Endothelial cell of umbilical vein (primary cell): ENCODE measurements at regions of chr3 and their contacts with region 1.

Region 1: DNA sequence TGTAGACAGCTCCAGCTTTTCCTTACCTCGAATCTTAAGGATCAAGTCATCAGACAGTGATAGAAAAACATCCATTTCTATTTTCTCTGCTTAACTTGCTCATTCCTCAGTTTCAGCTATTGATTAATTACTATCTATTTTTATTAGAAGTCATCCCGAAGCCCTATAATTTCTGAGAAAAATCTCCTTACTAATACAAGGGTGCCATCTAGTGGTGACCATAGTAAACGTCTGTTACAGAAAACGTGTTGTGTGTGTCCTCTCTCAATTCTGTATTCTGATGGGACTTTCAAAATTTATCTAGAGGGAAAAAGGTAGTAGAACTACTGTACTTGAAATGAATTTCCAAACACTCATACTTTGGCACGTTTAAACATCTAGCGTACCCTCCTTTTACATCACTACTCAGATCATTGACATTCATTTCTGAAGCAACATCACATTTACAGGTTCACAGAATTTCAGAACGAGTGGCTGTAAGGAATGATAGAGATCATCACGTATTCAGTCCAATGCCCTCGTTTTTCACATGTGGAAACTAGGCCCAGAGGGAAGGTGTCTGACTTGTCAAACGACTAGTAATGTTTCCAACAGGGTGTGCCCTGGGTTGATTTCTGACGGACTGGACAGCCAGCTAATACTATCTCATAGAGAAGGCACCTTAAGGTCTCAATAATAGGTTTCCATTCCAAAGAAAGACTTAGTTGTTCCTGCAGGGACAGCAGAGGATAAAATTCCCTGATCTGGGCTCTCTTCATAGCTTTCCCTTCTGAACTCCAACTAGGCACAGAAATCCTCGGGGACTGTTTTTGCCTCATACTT is 25.6 kb downstream of the HACD2 start:
- DNase-seq: peak; percentile 53
- H3K4me3 ChIP-seq: no peak overlapping the region
- H3K27ac ChIP-seq: no peak overlapping the region
- H3K4me1 ChIP-seq: no peaks in the 10 kb centered on the region
- H3K27me3 ChIP-seq: no peaks in the 10 kb centered on the region
- CTCF ChIP-seq: peak; percentile 44 to 51
- POLR2A ChIP-seq: no peak

Region 2: DNA sequence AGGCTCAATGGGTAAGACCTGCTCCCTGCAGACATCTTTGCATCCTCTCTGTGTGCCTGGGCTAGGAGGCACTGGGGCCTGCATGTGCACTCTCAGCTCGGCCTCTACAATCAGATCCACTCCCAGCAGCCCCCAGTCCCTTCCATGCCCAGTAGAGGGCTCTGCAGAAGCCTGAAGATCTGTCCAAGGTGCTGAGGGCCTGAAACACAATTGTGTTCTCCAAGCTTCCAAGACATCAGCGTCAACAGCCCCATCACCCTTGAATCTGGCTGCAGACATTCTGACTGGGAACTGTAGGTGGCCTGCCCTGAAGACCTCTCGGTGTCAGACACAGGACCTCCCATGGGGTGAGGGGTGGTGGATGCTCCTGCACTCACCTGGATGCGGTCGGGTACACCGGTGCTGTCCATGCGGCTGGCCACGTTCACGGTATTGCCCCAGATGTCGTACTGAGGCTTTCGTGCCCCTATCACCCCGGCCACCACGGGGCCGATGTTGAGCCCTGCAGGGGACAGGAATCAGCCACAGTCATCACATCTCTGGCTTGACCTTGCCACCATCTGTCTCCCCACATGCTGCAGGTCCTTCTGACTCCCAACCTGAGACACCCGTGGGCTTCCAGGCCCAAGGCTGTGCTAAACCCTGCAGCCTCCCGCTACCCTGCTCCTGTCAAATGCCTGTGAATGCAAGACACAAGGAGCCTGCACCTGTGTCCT is 272.8 kb before region 1 on chr3:
- CTCF ChIA-PET with region 1: interaction called, 24 read pairs
- POLR2A ChIA-PET with region 1: no interaction called
- dilution Hi-C with region 1: no loop called
- intact Hi-C with region 1: no loop called
- DNase-seq: peak; percentile 52
- H3K4me3 ChIP-seq: no peak overlapping the region
- H3K27ac ChIP-seq: no peak overlapping the region
- H3K4me1 ChIP-seq: no peaks in the 10 kb centered on the region
- H3K27me3 ChIP-seq: no peaks in the 10 kb centered on the region
- CTCF ChIP-seq: peak; percentile 84 to 92
- POLR2A ChIP-seq: no peak

Region 3: DNA sequence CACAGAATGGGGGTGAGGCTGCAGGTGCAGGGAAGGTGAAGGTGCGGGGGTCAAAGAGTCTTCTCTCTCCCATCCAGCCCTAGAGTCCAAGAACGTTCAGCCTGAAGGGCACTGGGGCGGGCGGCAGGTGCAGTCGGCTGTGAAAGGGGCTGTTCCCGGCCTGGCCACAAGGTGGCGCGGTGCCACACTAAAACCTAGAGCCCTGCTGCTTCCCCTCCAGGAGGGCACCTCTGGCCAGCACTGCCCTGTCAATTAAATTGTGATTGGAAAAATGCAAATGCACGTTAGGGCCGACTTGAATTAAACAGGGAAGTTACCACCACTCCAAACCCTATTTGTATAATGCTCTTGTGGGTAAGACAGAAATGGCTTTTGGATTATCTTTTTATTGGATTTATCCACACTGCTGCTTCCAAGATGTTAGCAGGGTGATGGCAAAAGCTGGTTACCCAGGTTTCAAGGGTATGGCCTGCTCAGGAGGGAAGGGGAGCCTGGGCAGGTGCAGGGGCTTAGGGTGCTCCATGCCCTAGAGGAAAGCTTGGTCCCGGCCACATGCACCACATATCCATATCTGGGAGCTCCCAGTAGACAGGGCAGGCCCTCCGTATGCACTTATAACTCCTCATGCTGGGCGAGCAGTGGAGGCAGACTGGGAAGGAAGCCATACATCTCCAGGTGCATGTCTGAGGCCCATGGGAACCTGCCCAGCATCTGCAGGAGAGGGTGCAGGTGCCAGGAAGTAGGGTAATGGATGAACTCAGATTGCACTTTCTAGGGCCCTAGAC is 230.2 kb before region 1 on chr3:
- CTCF ChIA-PET with region 1: interaction called, 151 read pairs
- POLR2A ChIA-PET with region 1: no interaction called
- dilution Hi-C with region 1: no loop called
- intact Hi-C with region 1: loop called (anchors 1 kb)
- DNase-seq: peak; percentile 52
- H3K4me3 ChIP-seq: no peak overlapping the region
- H3K27ac ChIP-seq: no peak overlapping the region
- H3K4me1 ChIP-seq: no peaks in the 10 kb centered on the region
- H3K27me3 ChIP-seq: no peaks in the 10 kb centered on the region
- CTCF ChIP-seq: peak; percentile 86 to 96
- POLR2A ChIP-seq: no peak

Region 4: GRCh38 chr3:123449102-123449996 is 109.9 kb before region 1 on chr3:
- CTCF ChIA-PET with region 1: interaction called, 16 read pairs
- POLR2A ChIA-PET with region 1: no interaction called
- dilution Hi-C with region 1: no loop called
- intact Hi-C with region 1: loop called (anchors 5 kb)
- DNase-seq: peak; percentile 4
- H3K4me3 ChIP-seq: peak overlapping the region in 2 of 3 experiments; percentile 32 to 38
- H3K27ac ChIP-seq: no peak overlapping the region
- H3K4me1 ChIP-seq: no peaks in the 10 kb centered on the region
- H3K27me3 ChIP-seq: peaks cover 38 to 58% of the 10 kb centered on the region in 2 experiments
- CTCF ChIP-seq: no peak
- POLR2A ChIP-seq: no peak

Region 5: DNA sequence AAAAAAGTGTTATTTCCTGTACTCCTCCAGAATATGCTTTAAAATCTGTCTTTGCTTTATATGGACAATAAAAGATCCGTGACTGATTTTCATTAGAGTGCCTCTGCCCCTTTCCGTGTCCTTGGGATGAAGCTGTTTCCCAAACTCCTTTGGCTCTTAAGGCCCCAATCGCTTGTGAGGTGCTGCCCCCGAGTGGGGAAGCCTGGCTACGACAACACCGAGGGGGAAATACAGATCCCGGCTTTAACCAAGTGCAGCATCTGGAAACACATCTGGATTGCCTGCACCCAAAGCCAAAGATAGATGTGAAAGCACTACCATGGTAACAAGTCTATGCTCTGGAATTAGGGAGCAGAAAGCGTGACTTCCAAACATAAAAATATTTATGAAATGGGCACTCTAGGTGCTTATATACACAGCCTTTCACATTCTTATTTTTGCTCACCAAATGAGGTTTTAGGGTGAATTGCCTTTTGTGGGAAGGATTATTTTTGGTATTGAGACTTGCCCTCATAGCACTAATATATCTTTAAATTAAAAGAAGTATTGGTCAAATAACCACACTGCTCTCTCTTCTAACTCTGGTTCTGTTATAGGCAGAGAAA is 69.7 kb before region 1 on chr3:
- CTCF ChIA-PET with region 1: interaction called, 9 read pairs
- POLR2A ChIA-PET with region 1: no interaction called
- dilution Hi-C with region 1: no loop called
- intact Hi-C with region 1: loop called (anchors 2 kb)
- DNase-seq: peak; percentile 67
- H3K4me3 ChIP-seq: no peak overlapping the region
- H3K27ac ChIP-seq: no peak overlapping the region
- H3K4me1 ChIP-seq: no peaks in the 10 kb centered on the region
- H3K27me3 ChIP-seq: no peaks in the 10 kb centered on the region
- CTCF ChIP-seq: peak; percentile 85 to 89
- POLR2A ChIP-seq: no peak

Region 6: DNA sequence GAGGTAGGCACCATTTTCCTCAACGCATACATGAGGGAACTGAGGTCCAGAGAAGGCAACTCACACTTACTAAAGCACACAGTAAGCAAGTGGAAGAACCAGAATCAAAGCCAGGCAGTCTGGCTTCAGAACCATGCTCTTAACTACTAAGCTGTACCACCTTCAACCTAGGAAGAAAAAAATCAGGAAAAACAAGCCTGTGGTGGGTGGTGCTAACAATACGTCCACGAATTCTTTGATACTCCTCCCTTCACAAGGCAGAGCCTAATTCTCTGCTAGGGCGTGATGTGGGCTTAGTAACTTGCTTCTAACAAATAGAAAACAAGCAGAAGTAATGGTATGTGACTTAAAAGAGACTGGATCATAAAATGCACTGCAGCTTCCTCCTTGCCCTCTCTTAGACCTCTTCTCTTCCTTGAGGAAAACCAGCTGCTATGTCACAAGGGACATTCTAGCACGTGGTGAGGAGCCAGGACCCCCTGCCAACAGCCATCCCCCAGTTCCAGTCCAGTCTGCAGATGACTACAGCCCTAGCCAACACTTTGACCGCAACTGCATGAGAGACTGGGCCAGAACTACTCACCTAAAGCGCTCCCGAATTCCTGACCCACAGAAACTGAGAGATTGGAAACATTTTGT is 11.3 kb before region 1 on chr3:
- CTCF ChIA-PET with region 1: interaction called, 21 read pairs
- POLR2A ChIA-PET with region 1: no interaction called
- dilution Hi-C with region 1: no loop called
- intact Hi-C with region 1: no loop called
- DNase-seq: no peak
- H3K4me3 ChIP-seq: no peak overlapping the region
- H3K27ac ChIP-seq: no peak overlapping the region
- H3K4me1 ChIP-seq: no peaks in the 10 kb centered on the region
- H3K27me3 ChIP-seq: no peaks in the 10 kb centered on the region
- CTCF ChIP-seq: no peak
- POLR2A ChIP-seq: no peak

Region 7: DNA sequence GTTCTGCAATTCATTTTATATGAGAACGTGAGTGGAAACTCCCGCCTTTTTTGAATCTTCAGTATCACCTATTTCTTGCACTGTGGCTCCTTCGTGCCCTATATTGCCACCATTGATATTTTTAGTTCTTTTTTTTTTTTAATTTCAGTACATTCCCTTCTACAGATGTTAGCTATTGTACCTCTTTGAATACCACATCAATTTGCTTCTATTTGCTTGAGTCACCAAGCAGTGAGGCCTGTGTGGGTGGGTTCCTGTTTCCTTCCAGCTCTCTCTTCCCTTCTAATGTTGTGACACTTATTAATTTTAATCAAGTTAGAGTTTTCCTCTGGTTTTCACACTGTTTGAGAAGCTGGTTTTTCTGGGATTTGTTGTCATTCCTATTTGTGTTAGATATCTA is 16.9 kb after region 1 on chr3:
- CTCF ChIA-PET with region 1: interaction called, 13 read pairs
- POLR2A ChIA-PET with region 1: no interaction called
- dilution Hi-C with region 1: no loop called
- intact Hi-C with region 1: no loop called
- DNase-seq: peak; percentile 33
- H3K4me3 ChIP-seq: no peak overlapping the region
- H3K27ac ChIP-seq: no peak overlapping the region
- H3K4me1 ChIP-seq: no peaks in the 10 kb centered on the region
- H3K27me3 ChIP-seq: no peaks in the 10 kb centered on the region
- CTCF ChIP-seq: no peak
- POLR2A ChIP-seq: no peak

Region 8: GRCh38 chr3:123799544-123800361 is 240.5 kb after region 1 on chr3:
- CTCF ChIA-PET with region 1: no interaction called
- POLR2A ChIA-PET with region 1: no interaction called
- dilution Hi-C with region 1: no loop called
- intact Hi-C with region 1: no loop called
- DNase-seq: no peak
- H3K4me3 ChIP-seq: no peak overlapping the region
- H3K27ac ChIP-seq: no peak overlapping the region
- H3K4me1 ChIP-seq: no peaks in the 10 kb centered on the region
- H3K27me3 ChIP-seq: peaks cover 0 to 11% of the 10 kb centered on the region in 2 experiments
- CTCF ChIP-seq: no peak
- POLR2A ChIP-seq: no peak

Region 9: GRCh38 chr3:124032648-124033359 is 473.6 kb after region 1 on chr3:
- CTCF ChIA-PET with region 1: no interaction called
- POLR2A ChIA-PET with region 1: no interaction called
- dilution Hi-C with region 1: no loop called
- intact Hi-C with region 1: no loop called
- DNase-seq: peak; percentile 90
- H3K4me3 ChIP-seq: peak overlapping the region; percentile 64 to 96 (median 65)
- H3K27ac ChIP-seq: peak overlapping the region; percentile 55
- H3K4me1 ChIP-seq: peaks cover 6% of the 10 kb centered on the region
- H3K27me3 ChIP-seq: peaks cover 22 to 31% of the 10 kb centered on the region in 2 experiments
- CTCF ChIP-seq: peak; percentile 48 to 70
- POLR2A ChIP-seq: peak; percentile 16